ENCODE measurements at regions of chr11 and their contacts with region 1.

Region 1: DNA sequence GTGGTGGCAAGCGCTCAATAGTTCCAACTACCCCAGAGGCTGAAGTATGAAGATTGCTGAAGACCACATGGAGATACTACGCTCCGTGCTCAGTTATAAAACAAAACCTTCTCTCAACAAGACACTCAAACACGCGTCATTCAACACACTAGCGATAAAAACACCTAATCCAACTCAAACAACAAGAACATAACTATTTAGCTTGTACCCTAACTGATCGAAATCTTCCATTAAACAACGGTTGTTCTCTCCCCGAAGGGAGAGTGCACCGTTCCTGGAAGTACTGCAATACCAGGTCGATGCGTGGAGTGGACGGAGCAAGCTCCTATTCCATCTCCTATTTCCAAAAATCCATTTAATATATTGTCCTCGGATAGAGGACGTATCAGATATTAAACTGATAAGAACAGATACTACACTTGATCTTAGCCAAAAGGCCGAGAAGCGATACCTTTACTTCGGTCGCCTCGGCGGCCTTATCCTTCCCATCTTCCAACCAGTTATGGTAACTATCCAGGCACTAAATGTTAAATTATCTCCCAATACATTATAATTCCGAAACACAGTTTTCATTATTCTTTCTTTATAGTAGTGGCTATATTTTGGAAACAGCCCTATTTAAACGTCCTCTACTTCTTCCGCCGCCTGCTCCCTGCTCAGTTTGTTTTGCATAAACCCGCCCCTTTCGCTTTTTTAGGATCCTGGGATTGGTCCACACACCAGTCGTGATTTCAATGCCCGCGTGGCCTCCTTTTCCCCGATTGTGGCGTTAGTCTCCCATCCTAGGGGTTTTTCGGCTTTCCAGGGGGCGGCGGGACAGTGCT is 2.2 kb upstream of the WDR74 start:
- DNase-seq: peak; percentile 59 to 94
- H3K4me3 ChIP-seq: peak overlapping the region; percentile 79 to 80
- H3K27ac ChIP-seq: peak overlapping the region; percentile 93 to 95
- H3K4me1 ChIP-seq: peaks cover 6 to 13% of the 10 kb centered on the region in 2 donors
- H3K27me3 ChIP-seq: no peaks in the 10 kb centered on the region
- CTCF ChIP-seq: no peak

Region 2: DNA sequence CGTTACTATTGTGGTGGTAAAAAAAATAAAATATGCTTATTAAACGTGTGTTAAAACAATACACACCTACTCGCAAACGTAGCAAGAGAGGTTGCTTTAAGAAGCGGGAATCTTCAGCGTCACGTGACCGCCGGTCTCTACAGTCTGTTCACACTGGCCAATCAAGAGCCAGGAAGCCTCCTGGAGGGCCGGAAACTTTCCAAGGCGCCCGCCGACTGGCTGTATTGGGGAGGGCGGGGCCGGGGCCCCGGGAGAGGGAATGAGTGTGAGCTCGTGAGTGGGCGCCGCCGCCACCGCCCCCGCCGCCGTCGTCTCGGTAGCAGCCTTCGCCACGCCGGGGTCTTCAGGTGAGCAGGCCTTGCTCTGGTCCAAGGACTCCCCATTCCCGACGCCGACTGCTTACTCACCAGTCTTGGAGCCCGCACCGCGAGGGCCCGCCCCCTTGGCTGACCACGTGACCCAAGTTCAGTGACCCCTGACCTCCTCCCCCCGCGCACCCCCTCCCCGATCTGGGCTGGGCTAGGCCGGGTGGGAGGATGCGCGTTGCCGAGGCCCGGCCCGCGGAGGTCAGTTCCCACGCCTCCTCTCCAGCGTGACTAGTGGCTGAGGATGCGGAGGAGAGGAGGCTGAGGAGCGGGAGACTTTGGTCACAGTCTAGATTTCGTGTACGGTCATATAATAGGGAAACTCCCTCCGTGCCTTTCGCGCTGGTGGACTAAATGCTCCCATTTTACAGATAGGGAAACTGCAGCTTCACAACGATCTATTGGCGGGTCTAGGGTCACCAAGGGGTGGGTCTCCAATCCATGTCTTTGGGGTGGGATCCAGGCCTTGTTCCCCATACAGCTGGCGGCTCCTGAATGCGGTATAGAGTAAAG is 70.2 kb before region 1 on chr11 and contains the start of gene TAF6L:
- intact Hi-C with region 1: loop called (anchors 2 kb)
- DNase-seq: peak; percentile 94 to 99
- H3K4me3 ChIP-seq: peak within 1 kb of the TSS; percentile 73 to 84
- H3K27ac ChIP-seq: peak within 1 kb of the TSS; percentile 93 to 97
- H3K4me1 ChIP-seq: peaks cover 3 to 17% of the 10 kb centered on the region in 2 donors
- H3K27me3 ChIP-seq: no peaks in the 10 kb centered on the region
- CTCF ChIP-seq: no peak
- total RNA-seq, gene TAF6L: 51.7 TPM

Region 3: GRCh38 chr11:62787005-62787759 is 54.4 kb before region 1 on chr11 and contains the start of gene TMEM179B:
- intact Hi-C with region 1: loop called (anchors 2 kb)
- DNase-seq: peak; percentile 96 to 100
- H3K4me3 ChIP-seq: peak within 1 kb of the TSS; percentile 78 to 94
- H3K27ac ChIP-seq: peak within 1 kb of the TSS; percentile 86 to 97
- H3K4me1 ChIP-seq: peaks cover 4 to 25% of the 10 kb centered on the region in 2 donors
- H3K27me3 ChIP-seq: no peaks in the 10 kb centered on the region
- CTCF ChIP-seq: peak; percentile 59 to 75 (median 62)
- total RNA-seq, gene TMEM179B: 102 TPM

Region 4: GRCh38 chr11:62855571-62856332 is 14.2 kb after region 1 on chr11:
- intact Hi-C with region 1: loop called (anchors 1 kb)
- DNase-seq: peak; percentile 87 to 97
- H3K4me3 ChIP-seq: peak overlapping the region; percentile 77 to 78
- H3K27ac ChIP-seq: peak overlapping the region; percentile 59 to 69
- H3K4me1 ChIP-seq: peaks cover 10 to 15% of the 10 kb centered on the region in 2 donors
- H3K27me3 ChIP-seq: no peaks in the 10 kb centered on the region
- CTCF ChIP-seq: no peak

Region 5: GRCh38 chr11:62880803-62881578 is 39.4 kb after region 1 on chr11 and contains the start of gene SLC3A2:
- intact Hi-C with region 1: loop called (anchors 1 kb)
- DNase-seq: peak; percentile 70 to 94
- H3K4me3 ChIP-seq: peak within 1 kb of the TSS; percentile 56 to 95
- H3K27ac ChIP-seq: peak within 1 kb of the TSS; percentile 91 to 98
- H3K4me1 ChIP-seq: peaks cover 17 to 44% of the 10 kb centered on the region in 2 donors
- H3K27me3 ChIP-seq: no peaks in the 10 kb centered on the region
- CTCF ChIP-seq: peak; percentile 64 to 89 (median 85)
- total RNA-seq, gene SLC3A2: 143 TPM

Region 6: DNA sequence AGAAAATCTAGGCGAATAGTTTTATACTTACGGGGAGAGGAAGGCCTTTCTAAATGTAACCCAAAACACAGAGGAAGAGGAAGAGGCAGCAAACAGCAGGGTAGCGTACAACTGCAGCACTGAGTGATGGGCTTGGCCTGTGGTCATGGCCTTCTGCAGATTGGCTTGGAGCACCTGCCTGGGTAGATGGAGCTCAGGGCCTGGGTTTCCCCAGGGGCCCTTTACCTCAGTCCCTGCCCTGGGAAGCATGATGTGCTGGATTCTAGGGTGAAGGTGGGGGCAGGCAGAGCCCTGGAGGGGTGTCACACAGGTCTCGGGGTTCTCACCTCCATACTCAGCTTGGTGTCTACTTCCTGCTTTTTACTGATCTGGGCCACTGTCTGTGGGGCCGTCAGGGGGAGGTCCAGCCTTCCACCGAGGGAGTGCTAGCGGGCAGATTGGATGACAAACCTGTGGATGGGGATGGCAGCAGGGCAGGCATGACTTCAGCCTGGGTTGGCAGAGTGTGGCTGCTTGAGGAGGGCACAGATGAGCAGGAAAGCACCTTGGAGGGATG is 107.3 kb after region 1 on chr11:
- intact Hi-C with region 1: no loop called
- DNase-seq: no peak
- H3K4me3 ChIP-seq: no peak overlapping the region
- H3K27ac ChIP-seq: no peak overlapping the region
- H3K4me1 ChIP-seq: no peaks in the 10 kb centered on the region
- H3K27me3 ChIP-seq: no peaks in the 10 kb centered on the region
- CTCF ChIP-seq: no peak